ENCODE measurements at regions of chr10 and their contacts with region 1.

Region 1: DNA sequence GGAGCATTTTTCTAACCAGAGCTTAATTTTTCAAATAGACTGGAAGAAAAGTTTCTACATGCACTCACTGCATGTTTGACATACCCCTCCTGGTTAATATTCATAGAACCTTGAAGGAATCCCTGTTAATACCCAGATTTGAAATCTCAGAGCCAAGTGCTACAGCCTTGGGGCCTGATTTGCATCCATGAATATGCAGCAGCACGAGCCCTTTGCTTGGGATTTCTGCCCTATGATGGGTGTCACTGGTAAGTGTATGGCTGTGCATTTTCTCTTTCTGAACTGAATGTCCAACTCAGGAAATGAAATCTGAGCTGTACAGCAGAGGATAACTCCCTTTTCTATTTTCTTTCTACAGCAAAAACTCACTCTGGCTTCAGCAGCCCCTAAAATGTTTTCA is 1157.5 kb downstream of the XPNPEP1 start:
- DNase-seq: no peak
- ATAC-seq: no peak
- H3K4me3 ChIP-seq: no peak overlapping the region
- H3K27ac ChIP-seq: no peak overlapping the region
- H3K4me1 ChIP-seq: no peaks in the 10 kb centered on the region
- H3K27me3 ChIP-seq: no peaks in the 10 kb centered on the region
- CTCF ChIP-seq: no peak

Region 2: DNA sequence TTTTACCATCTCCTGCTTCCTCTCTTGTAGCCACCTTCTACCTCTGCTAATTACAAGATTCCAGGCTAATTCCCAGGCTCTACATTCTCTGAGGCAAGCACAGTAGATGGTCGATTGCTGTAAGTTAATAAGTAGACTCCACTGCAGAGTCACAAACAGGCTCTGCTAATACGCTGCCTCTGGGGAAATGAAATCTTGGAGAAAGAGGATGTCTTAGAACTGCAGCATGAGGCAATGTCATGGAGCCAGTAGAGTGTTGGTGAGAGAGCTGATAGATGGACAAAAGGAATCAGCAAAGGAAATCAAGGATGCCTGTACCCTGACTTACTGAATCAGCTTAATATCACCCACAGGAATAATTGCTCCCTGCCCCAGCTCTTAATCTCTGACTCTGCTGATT is 102.8 kb before region 1 on chr10:
- CTCF ChIA-PET with region 1: interaction called, 10 read pairs
- POLR2A ChIA-PET with region 1: no interaction called
- in situ Hi-C with region 1: no loop called
- intact Hi-C with region 1: no loop called
- DNase-seq: no peak
- ATAC-seq: no peak
- H3K4me3 ChIP-seq: no peak overlapping the region
- H3K27ac ChIP-seq: no peak overlapping the region
- H3K4me1 ChIP-seq: no peaks in the 10 kb centered on the region
- H3K27me3 ChIP-seq: no peaks in the 10 kb centered on the region
- CTCF ChIP-seq: no peak